Heart right ventricle (tissue), 16 donors: ENCODE measurements at regions of chr1 and their contacts with region 1.

Region 1: GRCh38 chr1:9196129-9197040 is 38.2 kb upstream of the H6PD start:
- DNase-seq: peak; percentile 52 to 80
- ATAC-seq: peak; percentile 59 to 78 (median 70)
- H3K4me3 ChIP-seq: peak overlapping the region in 6 of 10 donors; percentile 14 to 31 (median 26)
- H3K27ac ChIP-seq: peak overlapping the region in 8 of 10 donors; percentile 16 to 82 (median 58)
- H3K4me1 ChIP-seq: peaks cover 5 to 53% (median 35%) of the 10 kb centered on the region in 9 donors
- H3K27me3 ChIP-seq: peaks cover 0 to 40% (median 32%) of the 10 kb centered on the region in 7 donors
- CTCF ChIP-seq: peak; percentile 54 to 92 (median 84)

Region 2: GRCh38 chr1:8910914-8911313 is 285.5 kb before region 1 on chr1:
- intact Hi-C with region 1: loop called in 1 of 10 experiments (anchors 10 kb)
- DNase-seq: no peak
- ATAC-seq: no peak
- H3K4me3 ChIP-seq: no peak overlapping the region
- H3K27ac ChIP-seq: no peak overlapping the region
- H3K4me1 ChIP-seq: peaks cover 0 to 10% (median 0%) of the 10 kb centered on the region in 9 donors
- H3K27me3 ChIP-seq: peaks cover 0 to 6% (median 0%) of the 10 kb centered on the region in 7 donors
- CTCF ChIP-seq: no peak

Region 3: DNA sequence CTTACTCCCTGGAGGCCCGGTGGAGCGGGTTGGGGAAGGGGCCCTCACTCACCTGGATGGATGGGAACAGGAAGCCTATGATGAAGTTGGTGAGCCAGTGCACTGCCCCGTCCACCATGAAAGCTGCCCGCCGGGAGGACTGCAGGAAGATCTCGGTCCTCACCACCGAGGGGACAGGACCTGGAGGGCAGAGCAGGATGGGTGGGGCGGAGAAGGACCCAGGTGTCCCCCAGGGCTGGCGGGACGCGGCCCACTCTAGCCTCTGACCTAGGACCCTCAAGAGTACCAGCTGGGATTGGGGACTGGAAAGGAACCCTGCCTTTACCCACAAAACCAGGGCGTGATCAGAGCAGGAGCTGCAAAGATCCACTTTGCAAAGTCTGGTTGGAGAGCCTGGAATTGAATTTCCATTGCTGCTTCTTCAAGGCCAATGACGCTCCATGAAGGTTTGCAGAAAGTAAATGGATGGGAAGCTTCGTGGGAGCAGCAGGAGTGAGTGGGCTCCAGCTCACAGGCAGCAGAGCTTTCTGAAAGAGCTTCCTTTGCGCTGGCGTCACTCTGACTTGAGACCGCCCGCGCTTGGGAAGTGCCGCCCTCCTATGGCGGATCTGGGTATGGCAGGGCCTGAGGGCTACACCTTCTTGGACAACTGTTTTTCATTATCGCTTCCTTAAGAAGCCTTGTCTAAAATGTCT is 191.5 kb before region 1 on chr1:
- intact Hi-C with region 1: loop called in 2 of 10 experiments (anchors 10 kb)
- DNase-seq: peak; percentile 71 to 82
- ATAC-seq: peak; percentile 7 to 88 (median 81)
- H3K4me3 ChIP-seq: no peak overlapping the region
- H3K27ac ChIP-seq: no peak overlapping the region
- H3K4me1 ChIP-seq: peaks cover 0 to 8% (median 0%) of the 10 kb centered on the region in 9 donors
- H3K27me3 ChIP-seq: no peaks in the 10 kb centered on the region
- CTCF ChIP-seq: peak; percentile 75 to 98 (median 96)

Region 4: DNA sequence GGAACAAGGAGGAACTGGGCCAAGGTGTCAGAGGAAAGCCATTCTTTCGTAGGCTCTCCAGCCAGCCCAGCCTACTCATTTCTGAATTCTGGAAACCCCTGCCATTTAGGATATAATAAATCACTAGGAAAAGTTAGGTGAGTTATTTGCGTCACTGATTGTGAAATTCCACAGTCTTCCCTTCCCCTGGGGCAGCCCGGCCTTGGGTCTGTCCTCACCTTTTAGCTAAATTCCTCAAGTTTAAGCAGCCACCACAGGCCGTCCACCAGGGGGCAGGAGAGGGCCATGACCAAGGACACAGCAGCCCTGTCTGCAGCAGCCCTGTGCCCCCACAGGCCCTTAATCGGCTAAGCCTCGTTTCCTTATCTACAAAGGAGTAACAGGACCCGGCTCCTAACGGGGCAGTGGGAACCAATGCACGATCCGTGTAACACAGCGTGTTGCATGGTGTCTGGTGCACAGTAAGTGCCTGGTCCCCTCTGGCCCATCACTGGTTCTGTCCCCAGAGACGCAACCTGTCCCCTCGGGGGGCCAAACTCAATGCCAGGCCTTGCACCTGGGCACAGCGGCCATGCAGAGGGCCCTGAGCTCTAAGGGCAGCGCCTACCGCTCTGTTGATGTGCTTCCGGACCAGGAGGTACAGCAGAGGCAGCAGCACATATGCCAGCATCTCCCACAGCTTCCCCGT is 85.6 kb before region 1 on chr1:
- intact Hi-C with region 1: loop called (anchors 1 to 5 kb)
- DNase-seq: peak; percentile 87 to 89
- ATAC-seq: peak; percentile 46 to 84 (median 76)
- H3K4me3 ChIP-seq: no peak overlapping the region
- H3K27ac ChIP-seq: peak overlapping the region in 1 of 10 donors; percentile 5
- H3K4me1 ChIP-seq: peaks cover 0 to 29% (median 7%) of the 10 kb centered on the region in 9 donors
- H3K27me3 ChIP-seq: no peaks in the 10 kb centered on the region
- CTCF ChIP-seq: peak; percentile 88 to 98 (median 90)

Region 5: DNA sequence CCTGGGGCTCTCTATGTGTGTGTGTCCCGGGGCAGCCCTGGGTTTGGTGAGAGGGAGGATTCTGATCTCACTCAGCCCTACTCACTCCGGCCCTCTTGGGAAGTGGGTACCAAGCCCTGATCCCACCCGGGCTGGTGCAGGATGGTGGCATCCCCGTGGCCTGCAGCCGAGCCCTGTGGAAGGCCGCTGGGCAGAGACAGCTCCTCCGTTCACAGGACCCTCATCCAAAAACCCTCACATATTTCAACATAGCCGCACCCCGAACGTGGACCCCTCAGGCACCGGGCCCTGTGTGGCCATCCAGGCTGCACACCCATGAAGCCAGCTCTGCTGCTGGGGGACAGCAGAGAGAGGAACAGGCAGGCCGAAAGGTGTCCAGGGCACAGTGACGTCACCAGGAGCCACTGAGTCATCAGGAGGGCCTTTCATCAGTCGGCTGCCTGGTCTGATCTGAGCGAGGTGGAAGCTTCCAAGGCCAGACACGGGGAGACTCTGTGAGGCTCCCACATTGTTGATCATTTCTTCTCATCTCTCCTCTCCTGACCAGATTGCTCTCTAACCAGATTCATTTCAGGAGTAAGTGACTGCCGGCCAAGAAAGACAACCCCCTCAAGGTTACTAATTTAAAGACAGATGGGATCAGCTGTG is 51.2 kb before region 1 on chr1:
- intact Hi-C with region 1: loop called (anchors 1 to 5 kb)
- DNase-seq: no peak
- ATAC-seq: no peak
- H3K4me3 ChIP-seq: no peak overlapping the region
- H3K27ac ChIP-seq: no peak overlapping the region
- H3K4me1 ChIP-seq: peaks cover 8 to 31% (median 17%) of the 10 kb centered on the region in 9 donors
- H3K27me3 ChIP-seq: no peaks in the 10 kb centered on the region
- CTCF ChIP-seq: no peak

Region 6: GRCh38 chr1:9150582-9151327 is 45.6 kb before region 1 on chr1:
- intact Hi-C with region 1: loop called in 1 of 10 experiments (anchors 2 kb)
- DNase-seq: peak; percentile 44 to 84
- ATAC-seq: peak; percentile 69 to 85 (median 75)
- H3K4me3 ChIP-seq: peak overlapping the region in 2 of 10 donors; percentile 5
- H3K27ac ChIP-seq: peak overlapping the region; percentile 52 to 95 (median 82)
- H3K4me1 ChIP-seq: peaks cover 13 to 41% (median 25%) of the 10 kb centered on the region in 9 donors
- H3K27me3 ChIP-seq: no peaks in the 10 kb centered on the region
- CTCF ChIP-seq: no peak